ENCODE measurements at regions of chr9 and their contacts with region 1.

Region 1: DNA sequence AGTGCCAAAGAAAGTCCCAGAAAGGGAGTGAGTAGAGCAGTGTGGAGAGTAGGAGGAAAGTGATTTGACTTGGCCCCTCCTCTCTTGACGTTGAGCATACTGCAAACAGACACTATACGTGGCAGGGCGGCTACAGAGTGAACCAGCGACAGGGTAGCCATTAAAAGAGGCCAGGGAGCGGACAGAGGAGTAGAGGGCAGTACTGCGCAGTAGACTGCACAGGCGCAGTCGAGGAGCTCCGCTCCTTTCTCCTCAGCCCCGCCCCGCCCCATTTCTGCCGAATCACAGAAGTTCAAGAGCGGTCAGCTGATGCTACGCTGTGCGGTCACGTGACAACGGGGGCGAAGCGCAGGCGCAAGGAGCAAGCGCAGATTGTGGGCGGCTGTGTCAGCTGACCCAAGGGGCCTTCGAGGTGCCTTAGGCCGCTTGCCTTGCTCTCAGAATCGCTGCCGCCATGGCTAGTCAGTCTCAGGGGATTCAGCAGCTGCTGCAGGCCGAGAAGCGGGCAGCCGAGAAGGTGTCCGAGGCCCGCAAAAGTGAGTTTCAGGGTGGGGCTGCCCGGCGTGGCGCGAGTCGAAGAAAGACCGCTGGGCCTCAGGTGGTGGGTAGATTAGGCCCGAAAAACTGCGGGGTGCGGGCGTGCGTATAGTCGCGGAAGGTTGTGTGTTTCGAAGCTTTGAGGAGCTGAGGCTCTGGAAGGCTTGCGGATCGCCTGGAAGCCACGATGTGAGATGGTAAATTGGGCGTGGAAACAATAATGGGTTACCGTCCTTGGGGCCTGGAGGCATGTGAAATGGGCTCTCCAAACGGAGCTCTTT is at the start of gene ATP6V1G1:
- DNase-seq: peak; percentile 100
- ATAC-seq: peak; percentile 96
- H3K4me3 Mint-ChIP-seq: peak within 1 kb of the TSS; percentile 99
- H3K27ac Mint-ChIP-seq: peak within 1 kb of the TSS; percentile 100
- H3K4me1 Mint-ChIP-seq: peaks cover 44% of the 10 kb centered on the region
- H3K27me3 Mint-ChIP-seq: no peaks in the 10 kb centered on the region
- total RNA-seq, gene ATP6V1G1: 33.8 to 37.7 TPM

Region 2: DNA sequence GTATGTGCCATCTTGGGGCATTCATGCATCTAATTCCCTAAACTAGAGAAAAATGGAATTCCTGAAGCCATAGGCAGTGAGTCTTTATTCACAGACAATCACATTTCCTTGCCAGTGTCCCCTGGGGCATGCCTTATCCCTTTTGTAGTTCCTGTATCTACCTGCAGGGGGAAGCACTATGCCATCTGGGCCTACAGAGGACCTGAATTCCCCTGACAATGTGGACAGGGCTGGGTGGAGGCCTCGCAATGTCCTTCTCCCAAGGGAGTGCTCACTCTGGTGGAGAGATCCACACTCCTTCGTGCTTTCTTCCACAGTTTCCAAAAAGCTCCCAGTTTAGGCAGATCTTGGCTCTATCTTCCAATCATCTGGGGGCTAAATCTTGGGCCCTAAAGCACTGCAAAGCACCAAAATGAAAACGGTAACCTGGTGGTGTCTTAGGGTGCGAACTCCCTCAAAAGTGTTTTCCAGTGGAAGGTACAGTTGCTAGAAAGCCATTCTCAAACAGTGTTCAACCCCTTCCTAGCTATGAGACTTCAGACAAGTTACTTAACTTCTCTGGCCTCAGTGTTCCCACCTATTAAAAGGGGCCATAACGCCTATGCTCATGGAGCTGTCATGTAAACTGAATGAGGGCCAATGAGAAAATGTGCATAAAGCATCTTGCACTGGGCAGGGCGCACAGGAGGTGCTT is 99.8 kb before region 1 on chr9:
- CTCF ChIA-PET with region 1: no interaction called
- POLR2A ChIA-PET with region 1: no interaction called
- intact Hi-C with region 1: loop called (anchors 1 to 5 kb)
- DNase-seq: peak; percentile 72
- ATAC-seq: peak; percentile 63
- H3K4me3 Mint-ChIP-seq: no peak overlapping the region
- H3K27ac Mint-ChIP-seq: no peak overlapping the region
- H3K4me1 Mint-ChIP-seq: peaks cover 25% of the 10 kb centered on the region
- H3K27me3 Mint-ChIP-seq: no peaks in the 10 kb centered on the region

Measured in activated CD4-positive, alpha-beta T cell treated with anti-CD3 and anti-CD28 coated beads for 36 hours (primary cell).